Right ventricle myocardium superior (tissue), 1 donor: ENCODE measurements at regions of chr17 and their contacts with region 1.

Region 1: DNA sequence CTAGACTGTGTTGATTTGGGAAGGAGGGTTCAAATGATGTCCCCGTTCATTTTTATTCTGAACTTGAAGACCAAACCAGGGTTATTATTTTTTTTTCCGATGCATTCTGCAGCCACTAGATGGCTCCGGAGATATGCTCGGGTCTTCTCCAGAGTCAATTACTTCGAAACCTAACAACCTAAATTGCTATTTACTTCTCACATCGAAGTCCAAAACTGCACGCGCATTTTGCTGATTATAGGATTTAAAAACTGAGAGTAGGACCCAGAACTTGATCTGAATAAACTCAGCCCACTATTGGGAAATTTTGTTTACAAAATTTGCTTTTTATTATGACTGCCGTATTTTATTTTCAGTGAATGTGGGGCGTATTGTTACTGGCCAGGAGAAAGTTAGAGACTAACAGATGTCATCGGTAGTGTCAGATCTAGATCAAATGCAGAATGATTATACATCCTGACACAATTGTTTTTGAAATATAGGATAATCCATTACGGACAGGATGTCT is 263.8 kb downstream of the HS3ST3A1 start:
- DNase-seq: no peak
- ATAC-seq: peak; percentile 89

Region 2: GRCh38 chr17:13297183-13297582 is 40.7 kb before region 1 on chr17:
- intact Hi-C with region 1: no loop called
- DNase-seq: no peak
- ATAC-seq: peak; percentile 15

Region 3: DNA sequence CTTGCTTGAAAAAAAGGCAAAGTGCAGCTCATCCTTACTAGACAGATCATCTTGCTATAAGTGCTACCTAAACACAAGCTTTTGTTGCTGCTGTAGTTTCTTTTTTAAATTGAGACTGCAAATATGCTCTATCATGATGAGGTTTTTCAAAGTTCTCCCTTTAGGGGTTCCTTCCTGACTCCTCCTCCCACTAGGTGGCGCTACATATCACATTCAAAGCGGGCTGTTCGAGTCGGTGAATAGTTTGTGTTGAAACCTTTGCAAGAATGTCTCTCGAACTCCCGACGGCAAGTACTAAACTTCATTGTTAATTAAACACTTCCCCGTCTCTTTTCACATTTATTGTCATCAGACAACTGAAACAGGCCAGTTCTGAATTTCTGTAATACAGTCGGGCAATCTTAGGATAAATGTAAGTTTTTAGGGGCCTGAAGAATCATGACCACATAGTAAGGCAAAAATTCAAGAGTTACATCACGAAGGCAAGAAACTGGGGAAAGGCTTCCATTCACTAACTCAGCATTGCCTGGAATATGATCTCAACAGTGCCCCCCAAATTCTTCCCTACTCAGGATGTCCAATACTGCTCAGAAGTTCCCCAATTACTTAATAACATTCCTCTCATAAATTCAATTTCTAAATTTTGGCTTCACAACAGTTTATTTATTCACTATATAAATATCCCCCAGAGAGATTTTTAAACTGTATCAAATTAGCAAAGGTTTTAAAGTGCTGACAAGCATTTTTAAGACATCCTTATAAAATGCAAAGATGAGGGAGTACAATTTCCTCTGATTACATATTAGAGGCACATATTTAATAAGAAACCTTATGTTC is 257.1 kb after region 1 on chr17:
- intact Hi-C with region 1: loop called (anchors 5 kb)
- DNase-seq: no peak
- ATAC-seq: peak; percentile 91

Region 4: GRCh38 chr17:14926526-14927122 is 1588.7 kb after region 1 on chr17:
- intact Hi-C with region 1: loop called (anchors 10 kb)
- DNase-seq: no peak
- ATAC-seq: no peak